Left ventricle myocardium inferior (tissue), 1 donor: ENCODE measurements at regions of chr5 and their contacts with region 1.

Region 1: DNA sequence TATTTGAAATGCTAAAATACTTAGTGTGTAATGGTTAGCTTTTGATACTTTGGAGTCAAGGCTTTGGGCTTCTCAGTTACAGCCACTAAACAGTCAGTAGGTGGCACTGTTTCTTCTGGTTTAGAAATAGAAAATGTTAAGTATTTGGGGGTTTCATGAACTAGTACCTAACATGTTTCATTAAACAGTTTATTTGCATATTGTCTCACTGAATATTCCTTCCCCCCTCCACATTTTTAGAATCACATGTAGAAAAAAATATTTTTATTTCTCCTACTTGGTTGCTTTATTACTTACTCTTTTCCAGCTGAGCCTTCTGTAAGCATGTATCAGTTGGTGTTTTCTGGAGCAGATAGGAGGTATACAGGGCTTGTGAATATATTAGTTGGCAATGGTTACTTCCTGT is 48.0 kb downstream of the IPO11 start:
- DNase-seq: no peak
- H3K4me3 ChIP-seq: no peak overlapping the region
- H3K27ac ChIP-seq: no peak overlapping the region
- H3K4me1 ChIP-seq: peaks cover 4% of the 10 kb centered on the region
- H3K27me3 ChIP-seq: no peaks in the 10 kb centered on the region
- CTCF ChIP-seq: peak; percentile 85

Region 2: GRCh38 chr5:62342476-62342837 is 118.1 kb before region 1 on chr5:
- intact Hi-C with region 1: no loop called
- DNase-seq: no peak
- H3K4me3 ChIP-seq: no peak overlapping the region
- H3K27ac ChIP-seq: no peak overlapping the region
- H3K4me1 ChIP-seq: no peaks in the 10 kb centered on the region
- H3K27me3 ChIP-seq: no peaks in the 10 kb centered on the region
- CTCF ChIP-seq: no peak

Region 3: DNA sequence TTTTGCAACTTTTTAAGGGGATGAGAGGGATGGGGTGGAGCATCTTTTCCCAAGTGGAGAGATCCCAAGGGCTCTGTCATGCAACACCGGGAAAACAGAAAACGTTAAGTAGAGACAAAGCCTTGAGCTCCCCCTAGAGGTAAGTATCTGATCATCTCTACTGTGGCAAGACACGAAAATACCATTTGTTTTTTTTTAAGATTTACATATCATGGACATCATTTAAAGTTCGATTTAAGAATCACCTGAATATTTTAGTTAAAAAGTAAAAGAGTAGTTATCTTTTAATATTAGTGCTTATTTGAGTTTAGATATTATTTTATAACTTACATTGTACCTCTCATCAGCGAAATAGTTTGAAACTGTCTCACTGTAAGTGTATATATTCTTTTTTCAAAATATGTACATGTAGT is 318.4 kb after region 1 on chr5:
- intact Hi-C with region 1: loop called (anchors 5 kb)
- DNase-seq: no peak
- H3K4me3 ChIP-seq: no peak overlapping the region
- H3K27ac ChIP-seq: no peak overlapping the region
- H3K4me1 ChIP-seq: peaks cover 4% of the 10 kb centered on the region
- H3K27me3 ChIP-seq: no peaks in the 10 kb centered on the region
- CTCF ChIP-seq: peak; percentile 83